Activated CD4-positive, alpha-beta memory T cell treated with anti-CD3 and anti-CD28 coated beads, Interleukin-2, amount 10 ng/mL, durations not matched to agents 7 days and 5 days (primary cell): ENCODE measurements at regions of chr22 and their contacts with region 1.

Region 1: DNA sequence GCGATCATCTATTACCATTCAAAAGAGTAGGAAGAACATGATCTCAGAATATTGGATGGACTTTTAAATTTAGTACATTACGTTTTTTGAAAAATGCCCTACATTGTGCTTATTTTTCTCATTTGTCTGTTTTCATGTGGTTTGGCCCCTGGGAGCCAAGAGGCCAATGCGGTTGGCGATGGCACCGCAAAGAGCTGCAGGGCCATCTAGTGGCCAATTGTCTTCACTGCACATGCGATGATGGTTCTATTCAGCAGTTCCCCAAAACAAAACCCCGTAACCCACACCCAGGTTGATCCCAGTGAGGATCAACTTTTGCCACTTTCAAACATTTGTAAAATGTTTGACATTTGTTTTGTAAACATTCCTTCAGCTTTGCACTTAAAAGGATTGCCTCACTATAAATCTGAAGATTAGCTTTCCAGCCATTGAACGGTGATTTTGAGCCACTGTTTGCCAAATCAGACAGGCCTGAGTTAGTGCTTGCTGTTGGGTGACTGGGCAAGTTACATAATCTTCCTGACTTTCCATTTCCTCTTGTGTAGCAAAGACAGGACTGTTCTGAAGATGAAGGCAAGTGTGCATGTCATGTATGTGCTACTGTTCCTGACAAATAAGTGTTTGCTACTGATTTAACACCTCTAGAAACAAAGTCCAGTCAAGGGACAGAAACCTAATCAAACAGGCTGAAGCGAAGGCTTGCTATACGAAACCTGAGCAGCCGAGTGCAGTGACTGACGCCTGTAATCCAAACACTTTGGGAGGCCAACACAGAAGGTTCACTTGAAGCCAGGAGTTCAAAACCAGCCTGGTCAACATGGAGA is 29.2 kb upstream of the XBP1 start:
- DNase-seq: peak; percentile 84
- H3K4me3 Mint-ChIP-seq: no peak overlapping the region
- H3K27ac Mint-ChIP-seq: no peak overlapping the region
- H3K4me1 Mint-ChIP-seq: peaks cover 40% of the 10 kb centered on the region
- H3K27me3 Mint-ChIP-seq: no peaks in the 10 kb centered on the region

Region 2: GRCh38 chr22:28600546-28601143 is 228.9 kb before region 1 on chr22:
- CTCF ChIA-PET with region 1: interaction called, 43 read pairs
- POLR2A ChIA-PET with region 1: interaction called, 8 read pairs
- DNase-seq: no peak
- H3K4me3 Mint-ChIP-seq: no peak overlapping the region
- H3K27ac Mint-ChIP-seq: no peak overlapping the region
- H3K4me1 Mint-ChIP-seq: no peaks in the 10 kb centered on the region
- H3K27me3 Mint-ChIP-seq: peaks cover 35% of the 10 kb centered on the region

Region 3: DNA sequence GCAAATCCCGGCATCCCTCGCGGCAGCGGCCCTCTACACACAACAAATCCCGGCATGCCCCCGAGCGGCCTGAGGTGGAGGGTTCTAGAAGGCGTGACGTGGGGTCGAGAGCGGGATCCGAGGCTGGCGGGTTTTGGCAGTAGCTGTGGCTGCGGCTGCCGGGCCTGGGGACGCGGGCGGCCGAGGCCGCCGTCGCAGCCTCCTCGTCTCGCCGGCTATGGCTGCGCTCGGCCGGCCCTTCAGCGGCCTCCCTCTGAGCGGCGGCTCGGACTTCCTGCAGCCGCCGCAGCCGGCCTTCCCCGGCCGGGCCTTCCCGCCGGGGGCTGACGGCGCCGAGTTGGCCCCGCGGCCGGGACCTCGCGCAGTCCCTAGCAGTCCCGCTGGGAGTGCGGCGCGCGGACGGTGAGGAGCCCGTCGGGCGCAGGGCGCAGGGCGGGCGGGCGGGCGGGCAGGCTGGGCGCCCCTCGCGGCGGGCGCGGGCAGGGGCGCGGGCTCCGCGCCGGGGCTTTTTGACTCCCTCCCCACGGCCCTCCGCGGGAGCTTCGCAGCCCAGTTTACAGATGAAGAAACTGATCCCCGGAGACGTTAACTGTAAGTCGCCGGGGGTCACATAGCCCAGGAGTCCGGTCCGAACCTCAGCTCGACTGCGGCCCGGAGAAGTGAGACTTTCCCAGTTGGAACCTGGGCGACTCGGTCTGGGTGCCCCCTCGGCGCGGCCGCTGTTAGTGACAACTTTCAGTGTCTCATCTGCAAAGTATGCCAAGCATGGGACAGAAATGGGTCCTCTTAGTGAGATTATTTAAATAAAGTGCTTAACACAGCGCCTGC is 56.7 kb before region 1 on chr22 and contains the start of gene CCDC117:
- CTCF ChIA-PET with region 1: interaction called, 4 read pairs
- POLR2A ChIA-PET with region 1: interaction called, 10 read pairs
- DNase-seq: peak; percentile 95
- H3K4me3 Mint-ChIP-seq: peak within 1 kb of the TSS; percentile 96
- H3K27ac Mint-ChIP-seq: peak within 1 kb of the TSS; percentile 97
- H3K4me1 Mint-ChIP-seq: peaks cover 24% of the 10 kb centered on the region
- H3K27me3 Mint-ChIP-seq: peaks cover 3% of the 10 kb centered on the region
- total RNA-seq, gene CCDC117: 33.6 to 35.2 TPM

Region 4: DNA sequence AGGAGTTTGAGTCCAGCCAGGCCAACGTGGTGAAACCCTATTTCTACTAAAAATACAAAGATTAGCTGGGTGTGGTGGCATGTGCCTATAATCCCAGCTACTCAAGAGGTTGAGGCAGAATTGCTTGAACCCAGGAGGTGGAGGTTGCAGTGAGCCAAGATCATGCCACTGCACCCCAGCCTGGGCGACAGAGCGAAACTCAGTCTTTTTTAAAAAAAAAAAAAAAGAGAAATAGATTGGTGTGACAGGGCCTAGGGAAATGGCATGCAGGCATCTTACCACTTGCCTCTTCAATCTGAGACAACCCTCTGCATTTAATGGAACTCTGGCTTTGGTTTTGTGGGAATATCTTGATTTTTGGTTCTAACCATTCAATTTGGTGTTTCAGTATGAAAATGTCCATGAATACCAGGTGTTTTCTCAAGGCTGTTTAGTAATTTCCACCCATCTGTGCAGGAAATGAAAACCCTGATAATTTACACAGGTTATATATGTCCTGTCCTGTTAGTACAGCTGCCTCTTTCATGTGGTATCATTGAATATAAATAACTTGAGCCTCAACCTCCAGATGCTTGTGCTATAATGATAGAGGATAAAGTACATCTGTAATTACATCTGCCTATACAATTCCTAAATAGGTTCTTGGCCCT is 37.6 kb before region 1 on chr22:
- CTCF ChIA-PET with region 1: interaction called, 54 read pairs
- POLR2A ChIA-PET with region 1: interaction called, 348 read pairs
- DNase-seq: no peak
- H3K4me3 Mint-ChIP-seq: no peak overlapping the region
- H3K27ac Mint-ChIP-seq: peak overlapping the region; percentile 58
- H3K4me1 Mint-ChIP-seq: peaks cover 63% of the 10 kb centered on the region
- H3K27me3 Mint-ChIP-seq: no peaks in the 10 kb centered on the region

Region 5: GRCh38 chr22:28810821-28811491 is 18.6 kb before region 1 on chr22:
- CTCF ChIA-PET with region 1: interaction called, 28 read pairs
- POLR2A ChIA-PET with region 1: interaction called, 25 read pairs
- DNase-seq: peak; percentile 75
- H3K4me3 Mint-ChIP-seq: peak overlapping the region; percentile 77
- H3K27ac Mint-ChIP-seq: peak overlapping the region; percentile 99
- H3K4me1 Mint-ChIP-seq: peaks cover 81% of the 10 kb centered on the region
- H3K27me3 Mint-ChIP-seq: no peaks in the 10 kb centered on the region

Region 6: GRCh38 chr22:28817919-28818909 is 11.4 kb before region 1 on chr22:
- CTCF ChIA-PET with region 1: interaction called, 28 read pairs
- POLR2A ChIA-PET with region 1: interaction called, 25 read pairs
- DNase-seq: peak; percentile 29
- H3K4me3 Mint-ChIP-seq: peak overlapping the region; percentile 41
- H3K27ac Mint-ChIP-seq: peak overlapping the region; percentile 71
- H3K4me1 Mint-ChIP-seq: peaks cover 81% of the 10 kb centered on the region
- H3K27me3 Mint-ChIP-seq: no peaks in the 10 kb centered on the region

Region 7: GRCh38 chr22:28841111-28841510 is 11.5 kb after region 1 on chr22:
- CTCF ChIA-PET with region 1: no interaction called
- POLR2A ChIA-PET with region 1: no interaction called
- DNase-seq: no peak
- H3K4me3 Mint-ChIP-seq: no peak overlapping the region
- H3K27ac Mint-ChIP-seq: no peak overlapping the region
- H3K4me1 Mint-ChIP-seq: no peaks in the 10 kb centered on the region
- H3K27me3 Mint-ChIP-seq: no peaks in the 10 kb centered on the region